H1 (cell line): ENCODE measurements at regions of chr1 and their contacts with region 1.

Region 1: DNA sequence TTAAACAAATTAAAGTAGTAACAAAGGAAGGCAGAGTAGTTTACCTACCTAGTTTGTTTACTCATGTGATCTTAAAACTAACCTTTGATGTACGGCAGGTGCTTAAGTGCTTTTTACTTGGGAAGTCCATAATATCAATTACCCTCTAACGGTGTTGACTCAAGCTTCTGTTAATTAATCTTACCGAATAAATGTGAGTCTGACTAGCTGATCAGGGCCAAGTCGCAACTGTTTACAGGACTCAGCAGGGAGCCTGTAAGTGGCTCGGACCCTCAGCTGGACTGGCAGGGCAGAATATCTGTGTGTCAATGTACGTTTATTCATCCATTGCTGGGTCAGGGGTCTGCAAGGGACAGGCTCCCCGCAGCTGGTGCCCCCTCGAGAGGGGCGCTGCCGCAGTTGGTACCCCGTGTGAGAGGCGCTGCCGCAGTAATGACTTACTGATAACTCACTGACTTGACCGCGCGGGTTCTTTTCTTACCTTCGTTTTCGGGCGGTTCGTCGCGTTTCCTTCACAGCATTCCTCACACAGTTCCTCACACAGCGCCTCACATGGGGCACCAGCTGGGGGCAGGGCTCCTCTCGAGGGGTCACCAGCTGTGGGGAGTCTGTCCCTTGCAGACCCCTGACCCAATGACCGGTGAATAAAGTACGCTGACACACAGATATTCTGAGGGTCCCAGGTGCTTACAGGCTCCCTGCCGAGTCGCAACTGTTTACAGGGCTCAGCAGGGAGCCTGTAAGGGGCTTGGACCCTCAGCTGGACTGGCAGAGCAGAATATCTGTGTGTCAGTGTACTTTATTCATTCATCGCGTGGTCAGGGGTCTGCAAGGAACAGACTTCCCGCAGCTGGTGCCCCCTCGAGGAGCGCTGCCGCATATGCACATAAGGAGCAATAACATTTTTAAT is 3.0 kb downstream of the FMO1 start:
- DNase-seq: peak in 1 of 2 experiments; percentile 61
- H3K4me3 ChIP-seq: peak overlapping the region; percentile 19 to 59 (median 56)
- H3K27ac ChIP-seq: no peak overlapping the region
- H3K4me1 ChIP-seq: peaks cover 3 to 12% (median 10%) of the 10 kb centered on the region in 4 experiments
- H3K27me3 ChIP-seq: peaks cover 0 to 2% (median 0%) of the 10 kb centered on the region in 4 experiments; a peak in 3 of 7 replicates
- CTCF ChIP-seq: peak; percentile 20 to 66 (median 59); a peak in 3 of 4 replicates
- EP300 ChIP-seq: no peak
- POLR2A ChIP-seq: no peak
- RAD21 ChIP-seq: peak; percentile 14 to 39; a peak in 2 of 4 replicates

Region 2: DNA sequence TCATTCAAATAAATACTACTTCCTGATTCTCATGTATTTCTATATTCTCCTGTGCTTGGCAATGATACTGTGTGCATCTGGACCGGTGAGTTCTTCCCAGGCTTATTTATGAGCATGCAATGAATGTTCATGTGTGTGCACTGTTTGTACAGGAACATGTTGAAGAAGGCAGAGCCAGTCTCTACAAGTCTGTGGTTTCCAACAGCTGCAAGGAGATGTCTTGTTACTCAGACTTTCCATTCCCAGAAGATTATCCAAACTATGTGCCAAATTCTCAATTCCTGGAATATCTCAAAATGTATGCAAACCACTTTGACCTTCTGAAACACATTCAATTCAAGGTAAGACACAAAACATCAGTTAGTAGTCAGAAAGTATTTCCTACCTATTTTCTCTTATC is 16.1 kb after region 1 on chr1:
- CTCF ChIA-PET with region 1: interaction called, 26 read pairs
- POLR2A ChIA-PET with region 1: no interaction called
- DNase-seq: no peak
- H3K4me3 ChIP-seq: no peak overlapping the region
- H3K27ac ChIP-seq: no peak overlapping the region
- H3K4me1 ChIP-seq: no peaks in the 10 kb centered on the region
- H3K27me3 ChIP-seq: no peaks in the 10 kb centered on the region
- CTCF ChIP-seq: no peak
- EP300 ChIP-seq: no peak
- POLR2A ChIP-seq: no peak
- RAD21 ChIP-seq: no peak

Region 3: DNA sequence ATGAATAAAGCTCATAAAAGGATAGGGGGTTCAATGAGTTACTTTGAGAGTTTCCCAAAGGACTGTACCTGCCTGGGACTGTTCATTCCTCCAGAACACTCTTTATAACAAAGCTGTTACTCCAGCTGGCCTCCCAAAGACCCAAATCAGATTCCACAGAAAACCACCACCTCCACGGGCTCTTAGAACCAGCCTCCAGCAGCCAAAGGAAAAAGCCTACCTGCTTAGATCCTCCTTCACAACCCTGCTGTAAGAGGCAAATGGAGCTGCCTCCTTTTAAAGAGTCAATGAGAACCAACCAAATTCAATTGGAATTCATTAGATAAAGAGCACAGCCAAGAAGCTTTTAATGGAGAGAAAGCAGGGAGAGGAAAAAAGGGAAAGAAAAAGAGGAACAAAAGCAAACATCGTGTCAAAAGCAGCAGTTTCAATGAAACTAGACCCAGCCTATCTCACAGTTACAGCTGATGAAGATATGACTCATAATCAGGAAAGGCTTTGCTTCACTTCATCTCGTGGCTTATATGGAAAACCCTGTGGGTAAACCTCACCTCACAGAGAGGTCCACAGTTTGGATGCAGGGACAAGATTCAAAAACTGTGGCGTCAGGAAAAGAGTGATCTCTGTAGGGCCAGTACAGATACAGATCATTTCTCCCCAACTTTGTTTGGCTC is 34.9 kb after region 1 on chr1:
- CTCF ChIA-PET with region 1: interaction called, 12 read pairs
- POLR2A ChIA-PET with region 1: no interaction called
- DNase-seq: no peak
- H3K4me3 ChIP-seq: no peak overlapping the region
- H3K27ac ChIP-seq: no peak overlapping the region
- H3K4me1 ChIP-seq: no peaks in the 10 kb centered on the region
- H3K27me3 ChIP-seq: peaks cover 0 to 2% (median 0%) of the 10 kb centered on the region in 4 experiments; a peak in 1 of 7 replicates
- CTCF ChIP-seq: no peak
- EP300 ChIP-seq: no peak
- POLR2A ChIP-seq: no peak
- RAD21 ChIP-seq: no peak